MCF 10A (cell line): ENCODE measurements at regions of chr1 and their contacts with region 1.

Region 1: DNA sequence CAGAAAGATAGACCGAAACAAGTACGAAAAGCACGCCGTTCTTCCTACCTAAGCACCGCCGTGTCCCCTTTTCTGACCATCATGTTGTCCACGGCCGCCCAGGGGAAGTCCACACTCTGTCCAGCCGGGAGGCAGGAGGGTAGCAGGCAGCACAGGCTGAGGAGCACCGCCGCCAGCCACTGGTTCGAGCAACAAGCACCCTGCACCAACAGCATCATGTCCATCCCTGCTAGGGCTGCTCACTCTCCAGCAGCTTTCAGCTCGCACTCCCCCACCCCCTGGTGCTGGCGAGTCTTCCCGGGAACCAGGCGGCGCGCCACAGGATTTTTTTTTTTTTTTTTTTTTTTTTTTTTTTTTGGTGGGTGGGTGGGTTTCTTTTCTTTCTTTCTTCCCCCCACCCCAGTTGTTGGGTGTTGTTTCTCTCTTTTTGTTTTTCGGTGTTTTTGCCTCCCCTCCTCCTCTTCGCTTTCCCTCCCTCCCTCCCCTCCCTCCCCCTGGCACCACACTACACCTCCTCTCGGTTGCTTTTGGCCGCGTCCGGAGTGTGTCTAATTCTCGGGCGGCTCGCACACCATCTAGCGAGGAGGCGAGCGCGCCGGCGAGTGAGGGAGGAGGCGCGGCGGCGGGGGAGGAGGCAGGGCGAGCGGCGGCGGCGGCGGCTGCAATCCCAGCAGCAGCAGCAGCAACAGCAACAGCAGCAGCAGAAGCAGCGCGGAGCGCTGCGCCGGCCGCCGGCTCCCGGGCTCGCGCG is at the start of gene NEGR1:
- DNase-seq: peak; percentile 94
- H3K4me3 Mint-ChIP-seq: no peak within 1 kb of the TSS
- H3K27ac Mint-ChIP-seq: peak within 1 kb of the TSS; percentile 0
- H3K4me1 Mint-ChIP-seq: peaks cover 13% of the 10 kb centered on the region
- H3K27me3 Mint-ChIP-seq: no peaks in the 10 kb centered on the region
- CTCF ChIP-seq: no peak
- total RNA-seq, gene NEGR1: 3.5 and 4.1 TPM in 2 replicates

Region 2: GRCh38 chr1:71593523-71593922 is 688.9 kb before region 1 on chr1:
- CTCF ChIA-PET with region 1: no interaction called
- POLR2A ChIA-PET with region 1: no interaction called
- intact Hi-C with region 1: loop called (anchors 5 kb)
- DNase-seq: peak; percentile 22
- H3K4me3 Mint-ChIP-seq: no peak overlapping the region
- H3K27ac Mint-ChIP-seq: no peak overlapping the region
- H3K4me1 Mint-ChIP-seq: no peaks in the 10 kb centered on the region
- H3K27me3 Mint-ChIP-seq: no peaks in the 10 kb centered on the region
- CTCF ChIP-seq: peak; percentile 21

Region 3: GRCh38 chr1:72000809-72001208 is 281.6 kb before region 1 on chr1:
- CTCF ChIA-PET with region 1: no interaction called
- POLR2A ChIA-PET with region 1: no interaction called
- intact Hi-C with region 1: no loop called
- DNase-seq: peak; percentile 15
- H3K4me3 Mint-ChIP-seq: no peak overlapping the region
- H3K27ac Mint-ChIP-seq: peak overlapping the region; percentile 28
- H3K4me1 Mint-ChIP-seq: peaks cover 4% of the 10 kb centered on the region
- H3K27me3 Mint-ChIP-seq: no peaks in the 10 kb centered on the region
- CTCF ChIP-seq: no peak

Region 4: GRCh38 chr1:72296481-72296880 is 14.0 kb after region 1 on chr1:
- CTCF ChIA-PET with region 1: interaction called, 6 read pairs
- POLR2A ChIA-PET with region 1: interaction called, 11 read pairs
- intact Hi-C with region 1: no loop called
- DNase-seq: no peak
- H3K4me3 Mint-ChIP-seq: no peak overlapping the region
- H3K27ac Mint-ChIP-seq: no peak overlapping the region
- H3K4me1 Mint-ChIP-seq: no peaks in the 10 kb centered on the region
- H3K27me3 Mint-ChIP-seq: no peaks in the 10 kb centered on the region
- CTCF ChIP-seq: no peak

Region 5: GRCh38 chr1:72399807-72400206 is 117.4 kb after region 1 on chr1:
- CTCF ChIA-PET with region 1: no interaction called
- POLR2A ChIA-PET with region 1: no interaction called
- intact Hi-C with region 1: loop called (anchors 10 kb)
- DNase-seq: no peak
- H3K4me3 Mint-ChIP-seq: no peak overlapping the region
- H3K27ac Mint-ChIP-seq: no peak overlapping the region
- H3K4me1 Mint-ChIP-seq: peaks cover 5% of the 10 kb centered on the region
- H3K27me3 Mint-ChIP-seq: no peaks in the 10 kb centered on the region
- CTCF ChIP-seq: no peak

Region 6: GRCh38 chr1:72601035-72601674 is 318.7 kb after region 1 on chr1:
- CTCF ChIA-PET with region 1: interaction called, 3 read pairs
- POLR2A ChIA-PET with region 1: no interaction called
- intact Hi-C with region 1: loop called (anchors 10 kb)
- DNase-seq: no peak
- H3K4me3 Mint-ChIP-seq: no peak overlapping the region
- H3K27ac Mint-ChIP-seq: no peak overlapping the region
- H3K4me1 Mint-ChIP-seq: no peaks in the 10 kb centered on the region
- H3K27me3 Mint-ChIP-seq: peaks cover 16% of the 10 kb centered on the region
- CTCF ChIP-seq: no peak

Region 7: GRCh38 chr1:72635719-72636118 is 353.3 kb after region 1 on chr1:
- CTCF ChIA-PET with region 1: no interaction called
- POLR2A ChIA-PET with region 1: no interaction called
- intact Hi-C with region 1: loop called (anchors 2 kb)
- DNase-seq: peak; percentile 94
- H3K4me3 Mint-ChIP-seq: peak overlapping the region; percentile 5
- H3K27ac Mint-ChIP-seq: no peak overlapping the region
- H3K4me1 Mint-ChIP-seq: peaks cover 30% of the 10 kb centered on the region
- H3K27me3 Mint-ChIP-seq: peaks cover 22% of the 10 kb centered on the region
- CTCF ChIP-seq: no peak